ENCODE measurements at regions of chr13 and their contacts with region 1.

Region 1: GRCh38 chr13:24243302-24243701 is 66.1 kb upstream of the C1QTNF9 start:
- DNase-seq: no peak
- ATAC-seq: no peak
- H3K4me3 ChIP-seq: no peak overlapping the region
- H3K27ac ChIP-seq: no peak overlapping the region
- H3K4me1 ChIP-seq: no peaks in the 10 kb centered on the region
- H3K27me3 ChIP-seq: no peaks in the 10 kb centered on the region
- CTCF ChIP-seq: no peak

Region 2: GRCh38 chr13:22482496-22483000 is 1760.8 kb before region 1 on chr13:
- CTCF ChIA-PET with region 1: no interaction called
- POLR2A ChIA-PET with region 1: no interaction called
- in situ Hi-C with region 1: no loop called
- intact Hi-C with region 1: no loop called
- DNase-seq: no peak
- ATAC-seq: no peak
- H3K4me3 ChIP-seq: no peak overlapping the region
- H3K27ac ChIP-seq: no peak overlapping the region
- H3K4me1 ChIP-seq: no peaks in the 10 kb centered on the region
- H3K27me3 ChIP-seq: no peaks in the 10 kb centered on the region
- CTCF ChIP-seq: no peak

Region 3: GRCh38 chr13:23175920-23176319 is 1067.4 kb before region 1 on chr13:
- CTCF ChIA-PET with region 1: no interaction called
- POLR2A ChIA-PET with region 1: interaction called, 10 read pairs
- in situ Hi-C with region 1: no loop called
- intact Hi-C with region 1: no loop called
- DNase-seq: no peak
- ATAC-seq: no peak
- H3K4me3 ChIP-seq: no peak overlapping the region
- H3K27ac ChIP-seq: no peak overlapping the region
- H3K4me1 ChIP-seq: no peaks in the 10 kb centered on the region
- H3K27me3 ChIP-seq: no peaks in the 10 kb centered on the region
- CTCF ChIP-seq: no peak